ENCODE measurements at regions of chr13 and their contacts with region 1.

Region 1: DNA sequence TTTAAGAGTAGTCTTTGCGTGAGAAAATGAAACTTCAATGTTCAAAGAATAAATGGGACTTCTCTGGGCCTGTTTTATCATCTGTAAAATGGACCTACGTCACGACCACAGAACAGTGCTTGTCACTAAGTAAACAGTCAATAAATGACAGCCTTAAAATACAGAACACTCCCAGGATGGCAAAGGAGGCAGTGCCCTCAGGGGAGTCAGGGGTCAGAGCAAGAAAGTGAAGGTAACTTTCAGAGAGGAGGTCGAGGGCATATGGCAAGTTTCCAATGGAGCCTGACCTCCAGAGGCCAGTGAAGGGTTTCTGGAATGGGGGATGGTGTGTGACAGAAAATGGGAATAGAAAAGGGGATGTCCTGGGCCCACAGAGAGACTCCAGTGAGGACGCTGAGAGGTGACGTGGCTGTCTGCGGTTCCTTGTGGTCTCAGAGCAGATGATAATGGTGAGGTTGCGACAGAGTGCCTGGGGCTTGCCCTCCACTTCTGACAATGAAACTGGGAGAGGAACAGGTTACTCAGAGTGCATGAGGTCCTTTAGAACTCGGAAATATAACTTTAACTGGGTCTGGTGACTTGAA is 91.8 kb downstream of the UBL3 start:
- DNase-seq: no peak
- H3K4me3 ChIP-seq: no peak overlapping the region
- H3K27ac ChIP-seq: no peak overlapping the region
- H3K4me1 ChIP-seq: peaks cover 11% of the 10 kb centered on the region
- H3K27me3 ChIP-seq: no peaks in the 10 kb centered on the region
- CTCF ChIP-seq: no peak
- POLR2A ChIP-seq: no peak

Region 2: DNA sequence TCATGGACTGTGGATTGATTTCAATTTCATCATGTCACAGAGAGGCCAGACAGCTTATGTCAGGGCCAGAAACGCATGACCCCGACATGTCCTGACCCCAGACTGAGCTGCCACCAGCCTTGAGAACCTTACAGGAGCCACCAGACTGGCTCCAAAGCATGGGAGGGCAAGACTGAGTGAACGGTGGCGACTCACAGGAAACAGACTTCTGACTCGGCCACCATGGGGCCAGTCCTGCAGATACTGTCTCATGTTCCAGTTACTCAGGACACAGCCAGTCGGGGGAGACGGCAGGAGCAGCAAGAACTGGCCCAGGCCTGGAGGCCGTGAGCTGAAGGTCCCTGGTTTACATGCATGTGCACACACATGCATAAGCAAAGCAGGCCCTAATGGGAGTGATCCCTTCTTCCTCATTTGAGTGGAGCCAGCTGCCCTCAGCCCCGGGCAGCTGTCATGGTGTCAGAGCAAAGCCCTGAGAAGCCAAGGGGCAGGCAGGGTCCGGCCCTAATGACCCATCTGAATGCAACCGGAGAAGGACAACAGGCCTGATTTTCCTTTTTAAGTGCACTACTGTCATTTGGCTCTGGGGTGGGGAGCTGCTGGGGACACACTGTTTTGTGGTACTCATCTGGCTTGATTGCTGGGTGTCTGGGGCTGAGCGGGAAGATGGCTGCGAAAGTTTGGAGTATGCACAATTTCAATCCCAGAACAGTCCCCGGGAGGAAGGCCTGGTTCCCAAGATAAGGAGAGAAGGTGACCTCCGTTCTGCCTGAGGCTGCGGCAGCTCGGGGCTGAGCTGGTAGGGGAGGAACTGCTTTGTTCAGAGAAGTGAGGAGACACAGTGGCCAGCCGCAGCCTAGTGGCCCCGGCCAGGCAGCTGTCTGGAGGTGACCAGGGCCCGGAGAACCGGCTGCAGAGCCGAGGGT is 245.0 kb before region 1 on chr13:
- intact Hi-C with region 1: loop called (anchors 10 kb)
- DNase-seq: no peak
- H3K4me3 ChIP-seq: no peak overlapping the region
- H3K27ac ChIP-seq: peak overlapping the region; percentile 60
- H3K4me1 ChIP-seq: peaks cover 17% of the 10 kb centered on the region
- H3K27me3 ChIP-seq: no peaks in the 10 kb centered on the region
- CTCF ChIP-seq: no peak
- POLR2A ChIP-seq: no peak

Region 3: GRCh38 chr13:29782798-29783197 is 24.2 kb after region 1 on chr13:
- intact Hi-C with region 1: no loop called
- DNase-seq: no peak
- H3K4me3 ChIP-seq: no peak overlapping the region
- H3K27ac ChIP-seq: no peak overlapping the region
- H3K4me1 ChIP-seq: peaks cover 32% of the 10 kb centered on the region
- H3K27me3 ChIP-seq: no peaks in the 10 kb centered on the region
- CTCF ChIP-seq: no peak
- POLR2A ChIP-seq: no peak